Right ventricle myocardium inferior (tissue), 1 donor: ENCODE measurements at regions of chr12 and their contacts with region 1.

Region 1: DNA sequence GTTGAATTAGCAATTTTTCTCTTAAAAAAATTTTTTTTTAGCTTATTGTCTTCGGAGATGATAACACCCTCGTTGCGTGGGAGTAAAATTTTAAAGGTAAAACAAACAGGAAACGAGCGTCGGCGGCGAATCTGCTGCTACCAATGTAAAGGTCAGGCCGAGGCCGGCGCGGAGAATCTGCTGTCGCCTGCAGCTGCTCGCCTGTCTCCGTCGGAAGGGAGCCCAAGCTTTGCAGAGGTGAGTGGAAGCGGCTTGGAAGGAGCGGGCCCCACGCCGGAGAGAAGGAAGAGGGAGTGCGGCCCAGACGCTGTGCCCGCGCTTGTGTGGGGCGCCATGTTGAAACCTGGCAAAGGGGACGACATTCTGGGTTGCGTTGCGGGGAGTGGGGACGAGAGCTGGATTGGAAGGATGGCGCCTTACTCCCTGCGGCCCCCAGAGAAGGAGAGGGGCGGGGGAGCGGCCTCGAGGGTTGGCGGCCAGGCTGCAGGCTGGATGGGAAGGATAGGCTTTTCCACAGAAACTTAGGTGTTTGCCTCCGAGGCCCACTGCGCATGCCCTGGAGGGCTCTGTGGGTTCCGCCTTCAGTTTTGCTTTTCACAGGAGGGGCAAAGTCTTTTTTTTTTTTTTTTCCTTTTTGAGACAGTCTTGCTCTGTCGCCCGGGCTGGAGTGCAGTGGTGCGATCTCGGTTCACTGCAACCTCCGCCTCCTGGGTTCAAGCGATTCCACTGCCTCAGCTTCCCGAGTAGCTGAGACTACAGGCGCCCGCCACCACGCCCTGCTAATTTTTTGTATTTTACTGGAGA is at the start of gene SNRNP35:
- DNase-seq: peak; percentile 93
- ATAC-seq: peak; percentile 80
- total RNA-seq, gene SNRNP35: 23.0 TPM

Region 2: GRCh38 chr12:123354600-123354999 is 103.6 kb before region 1 on chr12:
- intact Hi-C with region 1: no loop called
- DNase-seq: no peak
- ATAC-seq: no peak

Region 3: GRCh38 chr12:123365025-123365917 is 92.9 kb before region 1 on chr12:
- intact Hi-C with region 1: loop called (anchors 5 kb)
- DNase-seq: peak; percentile 99
- ATAC-seq: peak; percentile 95

Region 4: GRCh38 chr12:123388177-123388947 is 69.8 kb before region 1 on chr12:
- intact Hi-C with region 1: loop called (anchors 5 kb)
- DNase-seq: peak; percentile 91
- ATAC-seq: peak; percentile 68

Region 5: GRCh38 chr12:123533672-123534643 is 75.8 kb after region 1 on chr12 and contains the start of gene RILPL1:
- intact Hi-C with region 1: loop called (anchors 5 kb)
- DNase-seq: peak; percentile 83
- ATAC-seq: peak; percentile 67
- total RNA-seq, gene RILPL1: 94.3 TPM

Region 6: DNA sequence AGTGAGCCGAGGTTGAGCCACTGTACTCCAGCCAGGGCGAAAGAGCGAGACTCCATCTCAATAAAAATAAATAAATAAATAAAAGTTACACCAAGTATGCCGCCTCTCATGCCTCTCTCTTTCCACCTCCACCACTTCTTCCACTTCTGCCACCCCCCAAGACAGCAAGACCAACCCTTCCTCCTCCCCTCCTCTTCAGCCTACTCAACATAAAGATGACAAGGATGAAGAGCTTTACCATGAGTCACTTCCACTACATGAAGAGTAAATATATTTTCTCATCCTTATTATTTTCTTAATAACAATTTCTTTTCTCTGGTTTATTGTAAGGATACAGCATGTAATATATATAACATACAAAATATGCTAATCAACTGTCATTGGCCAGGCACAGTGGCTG is 122.6 kb after region 1 on chr12:
- intact Hi-C with region 1: loop called (anchors 5 kb)
- DNase-seq: no peak
- ATAC-seq: no peak